Activated naive CD4-positive, alpha-beta T cell treated with anti-CD3 and anti-CD28 coated beads for 36 hours (primary cell): ENCODE measurements at regions of chr2 and their contacts with region 1.

Region 1: DNA sequence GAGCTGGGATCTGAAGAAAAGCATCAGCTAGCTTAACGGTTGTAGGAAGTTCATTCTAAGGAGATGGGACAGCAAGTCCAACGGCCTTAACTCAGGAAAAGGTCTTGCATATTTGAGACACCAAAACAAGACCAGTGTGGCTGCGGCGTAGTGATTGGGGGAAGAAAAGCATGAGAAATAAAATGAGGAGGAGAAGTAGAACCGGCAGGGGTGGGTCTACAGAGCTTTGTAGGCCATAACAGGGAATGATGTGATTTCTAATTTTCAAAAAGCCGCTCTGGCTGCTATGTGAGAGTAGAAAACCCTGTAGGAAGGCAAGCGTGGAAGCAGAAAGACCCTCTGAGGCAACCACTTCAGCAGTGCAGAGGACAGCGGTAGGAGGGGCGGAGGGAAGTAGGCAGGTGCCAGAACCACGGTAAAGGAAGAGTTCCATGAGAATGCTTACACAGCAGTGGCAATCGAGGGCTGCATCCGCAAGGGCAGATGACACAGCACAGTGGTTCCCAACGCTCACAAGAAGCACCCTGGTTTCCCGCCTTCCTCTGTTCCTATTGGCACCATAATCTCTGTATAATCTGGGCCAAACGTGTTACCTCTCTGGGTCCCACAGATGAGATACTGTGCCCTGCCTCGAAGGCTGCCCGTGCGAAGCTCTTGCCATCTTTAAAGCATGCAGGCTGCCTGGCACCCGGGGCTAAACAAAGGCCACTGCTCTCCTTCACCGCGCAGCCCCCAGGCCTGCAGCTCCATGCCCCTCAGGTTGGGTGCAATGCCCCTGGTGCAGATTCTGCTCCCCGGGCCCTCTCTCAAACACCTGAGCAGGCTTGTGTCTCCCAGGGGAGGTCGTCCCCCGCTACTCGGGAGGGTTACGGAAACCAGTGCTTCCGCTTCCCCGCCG is 791 bp downstream of the ANKRD39 start:
- DNase-seq: peak; percentile 65
- H3K4me3 Mint-ChIP-seq: peak overlapping the region; percentile 86
- H3K27ac Mint-ChIP-seq: peak overlapping the region; percentile 71
- H3K4me1 Mint-ChIP-seq: peaks cover 34% of the 10 kb centered on the region
- H3K27me3 Mint-ChIP-seq: no peaks in the 10 kb centered on the region

Region 2: DNA sequence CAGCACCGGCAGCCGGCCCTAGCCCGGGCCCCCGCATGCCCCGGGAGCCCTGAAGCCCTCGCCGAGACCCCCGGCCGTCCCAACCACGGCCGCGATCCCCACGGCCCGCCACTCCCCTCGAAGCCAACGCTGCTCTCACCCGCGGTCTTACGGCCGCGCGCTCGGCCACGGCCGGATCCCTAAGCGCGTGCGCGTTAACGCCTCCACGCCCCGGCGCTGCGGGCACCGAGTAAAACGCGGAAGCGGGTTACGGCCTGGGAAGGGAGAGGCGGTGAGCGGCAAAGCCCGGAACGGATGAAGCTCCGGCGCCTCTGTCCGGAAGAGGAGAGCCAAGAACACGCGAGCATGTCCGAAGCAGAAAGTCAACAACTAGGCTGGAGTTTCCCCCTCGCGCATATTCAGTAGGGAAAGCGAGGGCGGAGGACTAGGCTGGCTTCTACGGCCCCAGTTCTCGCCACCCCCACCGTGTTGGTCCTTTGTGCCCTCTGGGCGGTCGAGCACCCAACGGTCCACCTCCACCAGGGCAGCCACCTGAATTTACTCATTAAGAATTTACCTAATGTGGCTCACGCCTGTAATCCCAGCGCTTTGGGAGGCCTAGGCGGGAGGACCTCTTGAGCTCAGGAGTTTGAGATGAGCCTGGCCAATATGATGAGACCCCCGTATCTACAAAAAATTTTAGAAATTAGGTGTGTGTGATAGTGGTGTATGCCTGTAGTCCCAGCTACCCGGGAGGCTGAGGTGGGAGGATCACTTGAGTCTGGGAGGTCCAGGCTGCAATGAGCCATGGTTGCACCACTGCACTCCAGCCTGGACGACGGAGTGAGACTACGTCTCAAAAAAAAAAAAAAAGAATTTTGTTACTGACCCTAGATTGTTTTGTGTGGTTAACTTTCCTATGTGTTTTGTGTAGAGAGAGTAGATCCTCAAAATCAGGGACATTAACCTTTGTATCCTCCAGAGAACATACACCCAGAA is 218.6 kb before region 1 on chr2 and contains the start of gene KANSL3:
- CTCF ChIA-PET with region 1: interaction called, 3 read pairs
- intact Hi-C with region 1: loop called (anchors 5 kb)
- DNase-seq: peak; percentile 92
- H3K4me3 Mint-ChIP-seq: peak within 1 kb of the TSS; percentile 93
- H3K27ac Mint-ChIP-seq: peak within 1 kb of the TSS; percentile 85
- H3K4me1 Mint-ChIP-seq: peaks cover 31% of the 10 kb centered on the region
- H3K27me3 Mint-ChIP-seq: no peaks in the 10 kb centered on the region
- total RNA-seq, gene KANSL3: 33.0 to 37.5 TPM

Region 3: DNA sequence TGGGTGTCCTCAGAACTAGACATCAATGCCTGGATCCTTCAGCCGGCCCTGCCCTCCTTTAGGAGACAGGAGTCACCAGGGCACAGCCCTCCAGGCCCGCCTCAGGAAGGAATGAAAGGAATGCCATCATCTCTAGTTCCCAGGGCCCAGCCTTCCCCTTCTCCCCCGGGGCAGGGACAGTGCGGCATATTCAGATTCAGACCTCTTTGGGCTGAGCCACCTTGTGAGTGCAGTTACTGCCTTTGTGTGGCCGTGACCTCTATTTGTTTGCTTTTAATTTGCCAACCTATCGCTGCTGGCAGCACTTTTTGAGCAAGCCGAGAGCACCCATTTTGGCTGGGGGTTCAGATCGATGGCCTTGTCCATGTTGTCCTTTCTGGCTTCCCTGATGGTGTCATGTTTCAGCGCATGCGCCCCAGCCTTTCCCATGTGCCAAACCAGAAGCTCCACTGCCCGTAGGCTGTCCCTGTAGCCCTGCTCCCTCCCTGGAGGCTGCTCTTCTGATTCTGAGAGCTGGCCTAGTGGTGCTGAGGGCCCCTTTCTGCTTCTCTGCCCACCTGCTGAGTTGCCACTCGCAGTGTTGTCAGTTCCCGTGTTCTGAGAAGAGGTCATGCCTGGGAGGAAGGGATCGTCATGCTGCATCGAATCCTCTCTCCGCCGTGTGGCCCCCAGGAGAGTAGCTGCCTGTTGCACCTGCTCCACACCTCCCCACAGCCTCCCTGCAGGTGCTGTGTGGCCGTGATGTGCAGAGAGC is 24.1 kb before region 1 on chr2:
- CTCF ChIA-PET with region 1: interaction called, 10 read pairs
- intact Hi-C with region 1: no loop called
- DNase-seq: no peak
- H3K4me3 Mint-ChIP-seq: no peak overlapping the region
- H3K27ac Mint-ChIP-seq: no peak overlapping the region
- H3K4me1 Mint-ChIP-seq: no peaks in the 10 kb centered on the region
- H3K27me3 Mint-ChIP-seq: no peaks in the 10 kb centered on the region

Region 4: GRCh38 chr2:96868555-96869280 is 11.7 kb after region 1 on chr2:
- CTCF ChIA-PET with region 1: interaction called, 25 read pairs
- intact Hi-C with region 1: loop called (anchors 1 kb)
- DNase-seq: peak; percentile 73
- H3K4me3 Mint-ChIP-seq: peak overlapping the region; percentile 77
- H3K27ac Mint-ChIP-seq: peak overlapping the region; percentile 78
- H3K4me1 Mint-ChIP-seq: peaks cover 37% of the 10 kb centered on the region
- H3K27me3 Mint-ChIP-seq: peaks cover 6% of the 10 kb centered on the region

Region 5: GRCh38 chr2:96940001-96940615 is 83.1 kb after region 1 on chr2:
- CTCF ChIA-PET with region 1: interaction called, 14 read pairs
- intact Hi-C with region 1: no loop called
- DNase-seq: no peak
- H3K4me3 Mint-ChIP-seq: no peak overlapping the region
- H3K27ac Mint-ChIP-seq: no peak overlapping the region
- H3K4me1 Mint-ChIP-seq: peaks cover 29% of the 10 kb centered on the region
- H3K27me3 Mint-ChIP-seq: no peaks in the 10 kb centered on the region

Region 6: GRCh38 chr2:96960153-96960961 is 103.3 kb after region 1 on chr2:
- CTCF ChIA-PET with region 1: interaction called, 214 read pairs
- intact Hi-C with region 1: loop called (anchors 1 kb)
- DNase-seq: peak; percentile 92
- H3K4me3 Mint-ChIP-seq: no peak overlapping the region
- H3K27ac Mint-ChIP-seq: no peak overlapping the region
- H3K4me1 Mint-ChIP-seq: peaks cover 49% of the 10 kb centered on the region
- H3K27me3 Mint-ChIP-seq: no peaks in the 10 kb centered on the region